Activated CD4-positive, alpha-beta T cell treated with anti-CD3 and anti-CD28 coated beads for 36 hours (primary cell): ENCODE measurements at regions of chr16 and their contacts with region 1.

Region 1: GRCh38 chr16:11851294-11852091 is at the start of gene RSL1D1:
- DNase-seq: peak; percentile 96
- ATAC-seq: peak; percentile 85
- H3K4me3 Mint-ChIP-seq: peak within 1 kb of the TSS; percentile 99
- H3K27ac Mint-ChIP-seq: peak within 1 kb of the TSS; percentile 96
- H3K4me1 Mint-ChIP-seq: peaks cover 52% of the 10 kb centered on the region
- H3K27me3 Mint-ChIP-seq: no peaks in the 10 kb centered on the region
- total RNA-seq, gene RSL1D1: 369 to 466 TPM

Region 2: GRCh38 chr16:11649276-11649675 is 202.2 kb before region 1 on chr16:
- CTCF ChIA-PET with region 1: no interaction called
- POLR2A ChIA-PET with region 1: no interaction called
- intact Hi-C with region 1: no loop called
- DNase-seq: no peak
- ATAC-seq: no peak
- H3K4me3 Mint-ChIP-seq: no peak overlapping the region
- H3K27ac Mint-ChIP-seq: no peak overlapping the region
- H3K4me1 Mint-ChIP-seq: peaks cover 4% of the 10 kb centered on the region
- H3K27me3 Mint-ChIP-seq: no peaks in the 10 kb centered on the region

Region 3: DNA sequence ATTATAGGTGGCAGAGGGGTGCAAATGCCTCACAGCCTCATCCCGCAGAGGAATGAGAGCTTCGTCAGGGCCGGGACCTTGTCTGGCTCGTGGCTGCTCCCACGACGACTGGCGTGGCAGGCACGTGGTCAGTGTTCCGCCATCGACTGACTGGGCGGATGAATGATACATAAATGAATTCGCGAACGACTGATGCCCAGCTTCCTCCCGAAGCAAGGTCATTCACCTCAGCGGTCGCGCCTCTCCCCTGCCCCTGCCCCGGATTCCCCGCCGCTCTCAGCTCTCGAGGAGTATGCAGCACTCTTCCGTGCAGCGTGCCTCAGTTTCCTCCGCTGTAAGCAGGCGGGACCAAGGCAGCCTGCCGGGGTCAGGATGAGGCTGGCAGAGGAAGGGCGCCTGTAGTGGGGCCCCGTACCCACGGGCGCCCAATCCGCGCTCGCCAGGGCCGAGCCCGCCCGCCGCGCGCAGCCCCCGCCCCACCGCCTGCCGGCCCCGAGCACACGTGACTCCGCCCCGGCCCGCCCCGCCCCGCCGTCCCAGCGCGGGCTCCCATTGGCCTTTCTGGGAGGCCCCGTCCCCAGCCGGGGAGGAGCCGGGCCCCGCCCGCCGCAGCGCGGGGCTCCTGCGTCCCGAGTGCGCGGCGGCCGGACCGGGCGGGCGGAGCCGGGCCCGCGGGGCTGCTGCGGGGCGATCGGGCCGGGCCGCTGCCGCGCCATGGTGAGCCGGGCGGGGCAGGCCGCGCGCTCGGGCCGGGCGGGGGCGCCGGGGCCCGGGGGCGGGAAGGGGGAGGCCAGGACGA is 183.5 kb before region 1 on chr16 and contains the start of gene SNN:
- CTCF ChIA-PET with region 1: interaction called, 3 read pairs
- POLR2A ChIA-PET with region 1: no interaction called
- intact Hi-C with region 1: loop called in 1 of 2 experiments (anchors 1 kb)
- DNase-seq: peak; percentile 93
- ATAC-seq: peak; percentile 90
- H3K4me3 Mint-ChIP-seq: peak within 1 kb of the TSS; percentile 72
- H3K27ac Mint-ChIP-seq: no peak within 1 kb of the TSS
- H3K4me1 Mint-ChIP-seq: peaks cover 73% of the 10 kb centered on the region
- H3K27me3 Mint-ChIP-seq: no peaks in the 10 kb centered on the region
- total RNA-seq, gene SNN: 6.0 to 7.2 TPM

Region 4: GRCh38 chr16:11783319-11784037 is 68.0 kb before region 1 on chr16:
- CTCF ChIA-PET with region 1: interaction called, 3 read pairs
- POLR2A ChIA-PET with region 1: no interaction called
- intact Hi-C with region 1: loop called in 1 of 2 experiments (anchors 1 kb)
- DNase-seq: peak; percentile 65
- ATAC-seq: peak; percentile 80
- H3K4me3 Mint-ChIP-seq: peak overlapping the region; percentile 74
- H3K27ac Mint-ChIP-seq: peak overlapping the region; percentile 97
- H3K4me1 Mint-ChIP-seq: peaks cover 74% of the 10 kb centered on the region
- H3K27me3 Mint-ChIP-seq: no peaks in the 10 kb centered on the region

Region 5: GRCh38 chr16:11819798-11820197 is 31.7 kb before region 1 on chr16:
- CTCF ChIA-PET with region 1: no interaction called
- POLR2A ChIA-PET with region 1: no interaction called
- intact Hi-C with region 1: no loop called
- DNase-seq: no peak
- ATAC-seq: no peak
- H3K4me3 Mint-ChIP-seq: no peak overlapping the region
- H3K27ac Mint-ChIP-seq: no peak overlapping the region
- H3K4me1 Mint-ChIP-seq: no peaks in the 10 kb centered on the region
- H3K27me3 Mint-ChIP-seq: no peaks in the 10 kb centered on the region

Region 6: DNA sequence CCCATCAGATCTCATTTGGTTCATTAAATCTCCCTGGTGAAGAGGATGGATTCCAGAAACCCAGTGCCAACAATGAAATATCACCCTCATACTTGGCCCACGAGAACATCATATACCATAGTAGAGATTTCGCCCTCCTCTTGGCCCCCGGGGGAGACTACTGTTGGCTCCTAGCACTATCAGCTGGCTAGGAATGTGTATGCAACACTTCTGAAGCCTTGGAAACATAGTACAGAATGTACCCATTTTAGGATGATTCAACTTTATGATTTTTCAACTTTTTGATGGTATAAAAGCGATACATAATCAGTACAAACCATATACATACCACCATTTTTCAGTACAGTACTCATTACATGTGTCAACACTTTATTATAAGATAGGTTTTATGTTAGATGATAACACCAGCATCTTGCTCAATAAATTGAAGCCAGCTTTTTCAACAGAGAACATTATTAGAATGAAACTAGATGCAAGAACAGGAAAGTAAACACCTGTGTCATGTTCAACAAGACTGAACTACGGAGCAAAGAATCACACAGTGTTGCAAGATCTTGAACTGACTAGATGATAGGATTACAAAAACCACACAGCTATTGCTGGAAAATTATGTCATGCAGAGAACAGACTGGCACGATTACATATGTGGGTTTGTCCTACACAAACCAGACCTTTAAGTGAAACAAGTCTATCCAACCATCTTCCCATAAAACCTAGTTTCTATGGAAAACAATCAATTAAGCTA is 17.4 kb before region 1 on chr16:
- CTCF ChIA-PET with region 1: no interaction called
- POLR2A ChIA-PET with region 1: no interaction called
- intact Hi-C with region 1: no loop called
- DNase-seq: no peak
- ATAC-seq: no peak
- H3K4me3 Mint-ChIP-seq: no peak overlapping the region
- H3K27ac Mint-ChIP-seq: no peak overlapping the region
- H3K4me1 Mint-ChIP-seq: no peaks in the 10 kb centered on the region
- H3K27me3 Mint-ChIP-seq: no peaks in the 10 kb centered on the region

Region 7: DNA sequence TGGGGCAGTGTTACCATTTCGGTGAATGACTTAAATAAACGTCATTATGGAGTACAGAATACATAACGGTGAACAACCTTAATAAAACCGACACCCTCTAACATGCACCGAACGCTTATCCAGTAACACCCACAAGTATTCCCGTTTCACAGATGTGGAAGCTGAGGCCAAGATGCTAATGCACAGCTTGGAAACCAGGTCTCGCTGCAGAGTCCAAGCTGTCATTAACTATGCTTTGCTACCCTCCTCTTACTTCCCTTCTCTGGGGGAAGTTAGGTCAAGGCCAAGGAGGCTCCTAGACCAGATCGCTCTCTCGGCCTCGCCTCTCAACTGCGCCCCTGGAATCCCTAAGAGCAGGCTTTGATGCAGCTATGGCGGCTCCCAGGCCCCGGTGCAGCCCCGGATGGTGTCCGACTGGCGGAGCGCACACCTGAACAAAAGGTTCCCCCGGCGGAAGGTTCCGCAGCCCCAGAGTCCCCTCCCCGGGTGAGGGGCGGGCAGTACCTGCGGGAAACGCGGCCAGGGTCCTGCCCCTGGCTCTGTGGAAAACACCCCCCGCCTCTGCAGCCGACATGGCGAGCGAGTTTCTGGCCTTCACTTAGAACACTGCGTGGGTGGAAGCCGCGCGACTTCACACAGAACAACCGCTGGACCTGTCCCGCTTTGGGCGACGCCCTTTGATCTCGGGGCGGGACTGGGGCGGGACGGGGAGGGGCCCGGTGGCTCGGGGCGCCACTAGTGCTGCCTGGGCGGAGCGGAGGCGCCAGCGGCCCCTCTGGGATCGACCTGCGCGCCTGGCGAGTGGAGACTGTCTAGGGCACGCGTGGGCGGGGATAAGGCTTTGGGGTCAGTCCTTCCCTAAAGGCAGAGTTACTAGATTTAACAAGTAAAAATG is 952.0 kb after region 1 on chr16 and contains the start of gene CPPED1:
- CTCF ChIA-PET with region 1: no interaction called
- POLR2A ChIA-PET with region 1: no interaction called
- intact Hi-C with region 1: loop called in 1 of 2 experiments (anchors 5 kb)
- DNase-seq: peak; percentile 95
- ATAC-seq: peak; percentile 93
- H3K4me3 Mint-ChIP-seq: peak within 1 kb of the TSS; percentile 97
- H3K27ac Mint-ChIP-seq: peak within 1 kb of the TSS; percentile 92
- H3K4me1 Mint-ChIP-seq: peaks cover 28% of the 10 kb centered on the region
- H3K27me3 Mint-ChIP-seq: no peaks in the 10 kb centered on the region
- total RNA-seq, gene CPPED1: 8.0 to 9.8 TPM